ENCODE measurements at regions of chr2 and their contacts with region 1.

Region 1: GRCh38 chr2:11688222-11689069 is 18.5 kb upstream of the NTSR2 start:
- DNase-seq: no peak
- ATAC-seq: peak; percentile 90
- H3K4me3 ChIP-seq: peak overlapping the region; percentile 22 to 35
- H3K27ac ChIP-seq: peak overlapping the region; percentile 55
- H3K4me1 ChIP-seq: peaks cover 12% of the 10 kb centered on the region
- H3K27me3 ChIP-seq: no peaks in the 10 kb centered on the region
- CTCF ChIP-seq: peak; percentile 95

Region 2: GRCh38 chr2:11539317-11540152 is 148.9 kb before region 1 on chr2:
- CTCF ChIA-PET with region 1: interaction called, 12 read pairs
- POLR2A ChIA-PET with region 1: no interaction called
- in situ Hi-C with region 1: no loop called
- intact Hi-C with region 1: no loop called
- DNase-seq: no peak
- ATAC-seq: 0 out of 2 replicates have a peak, but pooled peaks have one; percentile 11
- H3K4me3 ChIP-seq: no peak overlapping the region
- H3K27ac ChIP-seq: no peak overlapping the region
- H3K4me1 ChIP-seq: no peaks in the 10 kb centered on the region
- H3K27me3 ChIP-seq: peaks cover 16% of the 10 kb centered on the region
- CTCF ChIP-seq: no peak

Region 3: GRCh38 chr2:11720752-11721151 is 32.3 kb after region 1 on chr2:
- CTCF ChIA-PET with region 1: interaction called, 3 read pairs
- POLR2A ChIA-PET with region 1: interaction called, 12 read pairs
- in situ Hi-C with region 1: no loop called
- intact Hi-C with region 1: no loop called
- DNase-seq: no peak
- ATAC-seq: no peak
- H3K4me3 ChIP-seq: no peak overlapping the region
- H3K27ac ChIP-seq: no peak overlapping the region
- H3K4me1 ChIP-seq: no peaks in the 10 kb centered on the region
- H3K27me3 ChIP-seq: no peaks in the 10 kb centered on the region
- CTCF ChIP-seq: no peak

Region 4: GRCh38 chr2:11738589-11739436 is 50.4 kb after region 1 on chr2:
- CTCF ChIA-PET with region 1: interaction called, 12 read pairs
- POLR2A ChIA-PET with region 1: no interaction called
- in situ Hi-C with region 1: no loop called
- intact Hi-C with region 1: loop called (anchors 2 kb)
- DNase-seq: no peak
- ATAC-seq: peak; percentile 88
- H3K4me3 ChIP-seq: no peak overlapping the region
- H3K27ac ChIP-seq: peak overlapping the region; percentile 57; the same call in 1 of the 2 replicates
- H3K4me1 ChIP-seq: peaks cover 27% of the 10 kb centered on the region
- H3K27me3 ChIP-seq: no peaks in the 10 kb centered on the region
- CTCF ChIP-seq: peak; percentile 66

Region 5: DNA sequence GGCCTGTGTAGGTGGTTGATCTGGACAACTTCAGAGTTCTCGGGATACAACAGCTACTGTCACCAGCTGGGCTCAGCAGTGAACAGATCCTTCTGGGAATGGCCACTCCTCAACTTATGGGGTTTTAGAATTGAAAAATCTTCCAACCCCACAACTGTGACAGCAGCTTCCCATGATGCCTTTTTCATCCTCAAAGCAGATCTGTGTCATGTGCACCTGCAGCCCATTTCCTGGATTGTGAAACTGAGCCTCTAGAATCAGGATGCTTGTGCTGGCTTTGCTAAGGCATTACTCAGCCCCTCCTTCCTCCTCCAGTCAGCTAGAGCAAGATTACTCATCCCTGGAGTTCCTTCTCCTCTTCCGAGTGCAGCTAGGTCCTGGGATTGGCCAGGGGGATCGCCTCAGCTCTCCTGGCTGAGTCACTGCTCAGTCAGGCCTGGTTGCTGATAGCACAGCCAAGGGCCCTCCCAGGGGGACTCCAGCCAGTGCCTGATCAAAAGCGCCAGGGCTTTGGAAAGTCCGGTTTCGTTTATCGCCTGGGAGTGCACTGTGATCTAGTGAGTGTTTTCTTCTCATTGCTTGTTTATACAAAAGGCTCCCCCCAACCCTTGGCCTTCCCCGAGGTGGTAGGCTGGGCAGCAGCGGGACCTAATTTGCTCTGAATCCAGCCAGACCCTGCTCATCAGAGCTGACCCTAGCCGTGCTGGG is 55.6 kb after region 1 on chr2:
- CTCF ChIA-PET with region 1: interaction called, 12 read pairs
- POLR2A ChIA-PET with region 1: no interaction called
- in situ Hi-C with region 1: no loop called
- intact Hi-C with region 1: loop called (anchors 2 kb)
- DNase-seq: peak; percentile 97
- ATAC-seq: peak; percentile 91
- H3K4me3 ChIP-seq: peak overlapping the region; percentile 25 to 43
- H3K27ac ChIP-seq: peak overlapping the region; percentile 96
- H3K4me1 ChIP-seq: peaks cover 53% of the 10 kb centered on the region
- H3K27me3 ChIP-seq: no peaks in the 10 kb centered on the region
- CTCF ChIP-seq: no peak

Region 6: DNA sequence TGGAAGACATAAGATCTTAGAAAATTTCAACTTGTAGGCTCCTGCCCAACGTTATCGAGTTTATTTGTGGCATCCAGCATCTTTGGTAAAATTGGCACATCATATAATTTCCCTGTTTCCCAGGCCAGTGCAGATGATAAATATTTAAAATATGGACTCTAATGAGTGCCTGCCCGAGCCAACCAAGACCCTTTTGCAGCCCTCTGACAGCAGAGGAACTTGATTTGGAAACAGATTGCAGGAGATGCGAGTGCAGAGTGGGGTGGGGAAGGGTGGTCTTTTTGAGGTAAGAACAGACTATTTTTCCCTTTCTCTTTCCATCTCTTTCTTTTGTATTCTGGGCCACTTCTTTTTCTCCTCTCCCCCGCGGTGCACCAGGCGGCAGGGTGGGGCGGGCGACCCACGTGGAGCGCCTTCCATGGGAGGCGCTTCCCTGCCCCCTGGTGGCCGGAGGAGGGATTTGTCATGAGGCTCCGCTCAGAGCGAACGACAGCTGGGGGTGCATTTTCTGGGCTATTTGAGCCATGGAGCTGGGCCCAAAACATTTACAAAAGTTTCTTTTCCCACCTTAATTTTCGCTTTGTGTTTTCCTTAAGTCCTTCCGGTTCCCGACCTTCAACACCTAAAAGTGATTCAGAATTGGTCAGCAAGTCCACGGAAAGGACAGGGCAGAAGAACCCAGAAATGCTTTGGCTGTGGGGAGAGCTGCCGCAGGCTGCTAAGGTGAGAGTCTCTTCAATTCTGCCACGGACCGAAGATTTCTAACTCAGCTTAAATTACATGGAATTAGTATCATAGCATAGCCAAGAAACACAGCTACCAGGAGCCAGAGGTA is 90.7 kb after region 1 on chr2:
- CTCF ChIA-PET with region 1: interaction called, 9 read pairs
- POLR2A ChIA-PET with region 1: no interaction called
- in situ Hi-C with region 1: no loop called
- intact Hi-C with region 1: loop called (anchors 1 kb)
- DNase-seq: no peak
- ATAC-seq: peak; percentile 97
- H3K4me3 ChIP-seq: no peak overlapping the region
- H3K27ac ChIP-seq: peak overlapping the region; percentile 54
- H3K4me1 ChIP-seq: peaks cover 5% of the 10 kb centered on the region; the same call in 1 of the 2 replicates
- H3K27me3 ChIP-seq: no peaks in the 10 kb centered on the region
- CTCF ChIP-seq: peak; percentile 97